ENCODE measurements at regions of chr15 and their contacts with region 1.

Region 1: DNA sequence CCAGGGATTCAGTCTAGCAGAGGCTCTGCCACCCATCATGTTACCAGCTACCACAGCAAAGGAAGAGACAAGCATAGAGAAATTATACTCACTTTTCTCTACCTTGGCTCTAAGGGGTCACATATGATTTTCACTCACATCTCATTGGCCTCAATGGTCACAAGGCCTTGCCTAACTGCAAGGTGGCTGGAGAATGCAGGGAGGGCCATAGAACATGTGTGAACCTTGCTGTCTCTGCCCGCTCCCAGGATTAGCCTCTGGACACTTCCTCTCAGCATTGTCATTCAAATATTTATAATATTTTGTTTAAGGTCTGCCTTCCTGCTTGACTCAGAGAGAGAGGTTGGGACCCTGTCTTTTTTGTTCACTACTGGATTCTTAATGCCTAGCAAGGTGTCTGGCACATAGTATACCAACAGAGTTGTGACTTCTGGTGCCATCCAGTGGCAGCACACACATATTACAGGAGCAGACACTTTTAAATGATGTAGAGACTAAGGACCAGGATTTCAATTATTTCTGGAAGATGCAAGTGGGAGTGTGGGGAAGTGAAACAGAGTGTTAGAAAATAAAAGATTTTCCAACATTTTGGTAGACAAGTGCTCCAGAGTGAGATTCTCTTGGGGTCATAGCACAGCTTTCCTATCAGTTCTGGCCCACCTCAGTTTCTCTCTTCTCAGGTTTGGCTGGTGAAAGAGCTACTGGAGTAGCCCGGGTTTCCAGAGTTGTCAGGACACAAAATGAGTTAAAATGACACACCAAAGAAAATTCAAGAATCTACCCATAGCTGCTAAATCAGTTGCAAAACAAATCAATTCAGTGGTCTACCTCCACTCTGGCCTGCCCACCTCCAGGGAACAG is 119.0 kb upstream of the RASGRP1 start:
- DNase-seq: peak in 3 of 5 donors; percentile 61 to 77 (median 72)
- H3K4me3 ChIP-seq: no peak overlapping the region
- H3K27ac ChIP-seq: no peak overlapping the region
- H3K4me1 ChIP-seq: no peaks in the 10 kb centered on the region
- H3K27me3 ChIP-seq: no peaks in the 10 kb centered on the region
- CTCF ChIP-seq: peak; percentile 79

Region 2: GRCh38 chr15:38474155-38474757 is 209.4 kb before region 1 on chr15:
- intact Hi-C with region 1: loop called (anchors 10 kb)
- DNase-seq: peak in 3 of 5 donors; percentile 31 to 82 (median 72)
- H3K4me3 ChIP-seq: no peak overlapping the region
- H3K27ac ChIP-seq: no peak overlapping the region
- H3K4me1 ChIP-seq: no peaks in the 10 kb centered on the region
- H3K27me3 ChIP-seq: no peaks in the 10 kb centered on the region
- CTCF ChIP-seq: peak; percentile 87

Region 3: GRCh38 chr15:38745126-38745525 is 61.5 kb after region 1 on chr15:
- intact Hi-C with region 1: no loop called
- DNase-seq: no peak
- H3K4me3 ChIP-seq: no peak overlapping the region
- H3K27ac ChIP-seq: no peak overlapping the region
- H3K4me1 ChIP-seq: no peaks in the 10 kb centered on the region
- H3K27me3 ChIP-seq: no peaks in the 10 kb centered on the region
- CTCF ChIP-seq: no peak

Region 4: GRCh38 chr15:38905634-38906033 is 222.0 kb after region 1 on chr15:
- intact Hi-C with region 1: no loop called
- DNase-seq: no peak
- H3K4me3 ChIP-seq: no peak overlapping the region
- H3K27ac ChIP-seq: no peak overlapping the region
- H3K4me1 ChIP-seq: no peaks in the 10 kb centered on the region
- H3K27me3 ChIP-seq: no peaks in the 10 kb centered on the region
- CTCF ChIP-seq: no peak